AG04450 (cell line): ENCODE measurements at regions of chr16 and their contacts with region 1.

Region 1: GRCh38 chr16:84062734-84063640 is 20.4 kb upstream of the SLC38A8 start:
- DNase-seq: peak; percentile 48
- H3K4me3 ChIP-seq: no peak overlapping the region
- H3K27ac ChIP-seq: no peak overlapping the region
- H3K27me3 ChIP-seq: no peaks in the 10 kb centered on the region
- CTCF ChIP-seq: peak; percentile 87

Region 2: DNA sequence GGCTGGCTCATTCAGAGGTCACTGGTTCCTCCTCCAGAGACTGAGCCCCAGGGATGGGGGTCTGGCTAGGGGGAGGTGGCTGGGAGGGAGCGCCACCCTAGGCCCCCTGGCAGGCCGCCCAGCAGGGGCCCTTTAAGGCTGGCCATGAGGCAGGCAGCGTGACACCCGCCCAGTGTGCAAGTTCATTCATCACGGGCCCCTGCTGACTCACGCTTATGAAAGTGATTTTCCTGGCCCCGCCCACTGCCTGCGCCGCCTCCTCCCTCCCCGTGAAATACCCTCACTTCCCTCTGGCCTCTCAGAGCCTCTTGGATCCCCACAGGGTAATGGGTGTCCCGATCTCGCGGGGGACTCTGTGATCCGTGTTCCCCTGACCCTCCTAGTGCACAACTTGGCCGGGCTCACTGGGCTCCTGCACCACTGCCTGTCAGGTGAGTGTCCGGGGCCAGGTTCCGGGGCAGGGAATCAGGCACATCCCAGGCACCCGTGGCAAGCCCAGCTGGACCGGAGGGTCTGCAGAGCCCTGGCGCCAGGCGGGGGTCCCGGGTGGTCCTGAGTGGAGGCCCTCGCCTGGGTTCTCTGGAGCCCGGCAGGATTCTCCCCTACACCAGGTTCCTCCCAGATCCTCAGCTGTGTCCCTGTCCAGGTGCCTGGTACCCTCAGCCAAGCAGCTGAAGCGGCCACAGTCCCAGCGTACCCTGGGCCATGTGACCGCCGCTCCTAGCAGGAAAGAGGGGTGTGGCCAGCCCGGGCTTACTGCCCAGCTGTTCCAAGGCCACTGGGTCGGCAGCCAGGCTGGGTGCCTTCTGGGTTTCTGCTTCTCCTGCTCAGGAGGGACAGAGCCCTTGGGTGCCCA is 109.8 kb before region 1 on chr16 and contains the start of gene OSGIN1:
- CTCF ChIA-PET with region 1: interaction called, 171 read pairs
- POLR2A ChIA-PET with region 1: no interaction called
- DNase-seq: peak; percentile 83
- H3K4me3 ChIP-seq: peak within 1 kb of the TSS; percentile 75
- H3K27ac ChIP-seq: peak within 1 kb of the TSS; percentile 95
- H3K27me3 ChIP-seq: no peaks in the 10 kb centered on the region
- CTCF ChIP-seq: no peak
- polyA plus RNA-seq, gene OSGIN1: 6.2 and 8.5 TPM in 2 replicates

Region 3: GRCh38 chr16:83979456-83979855 is 83.5 kb before region 1 on chr16:
- CTCF ChIA-PET with region 1: interaction called, 14 read pairs
- POLR2A ChIA-PET with region 1: no interaction called
- DNase-seq: no peak
- H3K4me3 ChIP-seq: no peak overlapping the region
- H3K27ac ChIP-seq: no peak overlapping the region
- H3K27me3 ChIP-seq: peaks cover 22% of the 10 kb centered on the region
- CTCF ChIP-seq: no peak

Region 4: GRCh38 chr16:84084570-84085270 is 21.7 kb after region 1 on chr16:
- CTCF ChIA-PET with region 1: interaction called, 31 read pairs
- POLR2A ChIA-PET with region 1: no interaction called
- DNase-seq: peak; percentile 10
- H3K4me3 ChIP-seq: no peak overlapping the region
- H3K27ac ChIP-seq: no peak overlapping the region
- H3K27me3 ChIP-seq: no peaks in the 10 kb centered on the region
- CTCF ChIP-seq: peak; percentile 84